Activated T-helper 1 cell treated with anti-CD3 and anti-CD28 coated beads, Interleukin-12 subunit alpha, Interleukin-12 subunit beta, Interleukin-2, Interleukin-4 antibody, amounts not matched to agents 30 ng/mL and 10 ng/mL and 1 ng/mL, durations not matched to agents 14 hours and 24 hours and 36 hours (primary cell): ENCODE measurements at regions of chr5 and their contacts with region 1.

Region 1: GRCh38 chr5:140113699-140114263 is at the start of gene PURA:
- DNase-seq: peak; percentile 94
- H3K4me3 Mint-ChIP-seq: peak within 1 kb of the TSS; percentile 94
- H3K27ac Mint-ChIP-seq: peak within 1 kb of the TSS; percentile 96
- H3K4me1 Mint-ChIP-seq: peaks cover 60% of the 10 kb centered on the region
- H3K27me3 Mint-ChIP-seq: peaks cover 40% of the 10 kb centered on the region
- total RNA-seq, gene PURA: 10.6 and 12.2 TPM in 2 replicates

Region 2: GRCh38 chr5:139787568-139788293 is 326.1 kb before region 1 on chr5:
- intact Hi-C with region 1: loop called (anchors 5 kb)
- DNase-seq: peak; percentile 70
- H3K4me3 Mint-ChIP-seq: peak overlapping the region; percentile 82
- H3K27ac Mint-ChIP-seq: no peak overlapping the region
- H3K4me1 Mint-ChIP-seq: no peaks in the 10 kb centered on the region
- H3K27me3 Mint-ChIP-seq: peaks cover 32% of the 10 kb centered on the region

Region 3: GRCh38 chr5:140073296-140073695 is 40.5 kb before region 1 on chr5:
- intact Hi-C with region 1: loop called (anchors 1 kb)
- DNase-seq: no peak
- H3K4me3 Mint-ChIP-seq: no peak overlapping the region
- H3K27ac Mint-ChIP-seq: no peak overlapping the region
- H3K4me1 Mint-ChIP-seq: no peaks in the 10 kb centered on the region
- H3K27me3 Mint-ChIP-seq: peaks cover 22% of the 10 kb centered on the region

Region 4: GRCh38 chr5:140145818-140146522 is 32.2 kb after region 1 on chr5:
- intact Hi-C with region 1: loop called (anchors 1 kb)
- DNase-seq: peak; percentile 41
- H3K4me3 Mint-ChIP-seq: no peak overlapping the region
- H3K27ac Mint-ChIP-seq: no peak overlapping the region
- H3K4me1 Mint-ChIP-seq: peaks cover 5% of the 10 kb centered on the region
- H3K27me3 Mint-ChIP-seq: peaks cover 42% of the 10 kb centered on the region

Region 5: DNA sequence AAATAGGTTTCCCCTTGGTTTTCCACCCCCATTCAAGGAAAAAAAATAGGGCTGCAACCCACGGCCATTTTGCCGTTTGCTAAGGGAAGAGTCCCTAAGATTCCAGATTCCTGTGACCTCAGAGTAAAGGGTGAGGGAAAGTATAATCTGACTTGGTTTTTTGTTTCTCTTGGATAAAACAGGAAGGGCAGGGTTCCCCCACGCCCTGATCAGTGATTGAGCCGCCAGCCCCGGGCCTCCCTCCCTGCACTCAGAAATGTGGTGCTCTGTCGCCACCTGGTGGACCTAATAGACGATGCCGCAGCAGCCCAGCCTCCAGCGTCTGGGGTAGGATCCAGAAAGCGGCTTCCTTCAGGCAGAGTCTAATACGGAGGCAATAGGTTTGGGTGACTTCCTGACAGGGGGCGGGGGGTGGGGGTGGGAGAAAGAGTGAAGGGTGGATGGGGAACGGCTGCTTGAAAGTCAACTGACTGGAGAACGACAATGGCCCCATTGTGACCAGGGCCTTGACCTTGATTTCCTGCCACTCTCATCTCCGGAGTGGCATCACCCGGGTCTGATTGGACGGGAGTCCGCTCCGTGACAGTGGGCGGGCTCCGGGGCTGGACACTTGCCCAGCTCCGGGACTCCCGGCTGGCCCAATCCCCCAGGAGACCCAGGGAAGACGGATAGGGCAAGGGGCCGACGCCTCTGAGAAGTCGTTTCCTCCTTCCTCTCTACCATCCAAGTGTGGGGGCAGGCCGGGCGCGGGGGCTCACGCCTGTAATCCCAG is 43.4 kb after region 1 on chr5:
- intact Hi-C with region 1: loop called (anchors 1 kb)
- DNase-seq: peak; percentile 76
- H3K4me3 Mint-ChIP-seq: peak overlapping the region; percentile 41
- H3K27ac Mint-ChIP-seq: no peak overlapping the region
- H3K4me1 Mint-ChIP-seq: no peaks in the 10 kb centered on the region
- H3K27me3 Mint-ChIP-seq: peaks cover 4% of the 10 kb centered on the region

Region 6: GRCh38 chr5:140564196-140565023 is 450.6 kb after region 1 on chr5 and contains the starts of genes APBB3 and SLC35A4:
- intact Hi-C with region 1: loop called (anchors 1 kb)
- DNase-seq: peak; percentile 98
- H3K4me3 Mint-ChIP-seq: peak within 1 kb of the TSS; percentile 95
- H3K27ac Mint-ChIP-seq: peak within 1 kb of the TSS; percentile 96
- H3K4me1 Mint-ChIP-seq: peaks cover 54% of the 10 kb centered on the region
- H3K27me3 Mint-ChIP-seq: no peaks in the 10 kb centered on the region
- total RNA-seq, gene APBB3: 17.2 and 21.2 TPM in 2 replicates
- total RNA-seq, gene SLC35A4: 94.3 and 107 TPM in 2 replicates

Region 7: DNA sequence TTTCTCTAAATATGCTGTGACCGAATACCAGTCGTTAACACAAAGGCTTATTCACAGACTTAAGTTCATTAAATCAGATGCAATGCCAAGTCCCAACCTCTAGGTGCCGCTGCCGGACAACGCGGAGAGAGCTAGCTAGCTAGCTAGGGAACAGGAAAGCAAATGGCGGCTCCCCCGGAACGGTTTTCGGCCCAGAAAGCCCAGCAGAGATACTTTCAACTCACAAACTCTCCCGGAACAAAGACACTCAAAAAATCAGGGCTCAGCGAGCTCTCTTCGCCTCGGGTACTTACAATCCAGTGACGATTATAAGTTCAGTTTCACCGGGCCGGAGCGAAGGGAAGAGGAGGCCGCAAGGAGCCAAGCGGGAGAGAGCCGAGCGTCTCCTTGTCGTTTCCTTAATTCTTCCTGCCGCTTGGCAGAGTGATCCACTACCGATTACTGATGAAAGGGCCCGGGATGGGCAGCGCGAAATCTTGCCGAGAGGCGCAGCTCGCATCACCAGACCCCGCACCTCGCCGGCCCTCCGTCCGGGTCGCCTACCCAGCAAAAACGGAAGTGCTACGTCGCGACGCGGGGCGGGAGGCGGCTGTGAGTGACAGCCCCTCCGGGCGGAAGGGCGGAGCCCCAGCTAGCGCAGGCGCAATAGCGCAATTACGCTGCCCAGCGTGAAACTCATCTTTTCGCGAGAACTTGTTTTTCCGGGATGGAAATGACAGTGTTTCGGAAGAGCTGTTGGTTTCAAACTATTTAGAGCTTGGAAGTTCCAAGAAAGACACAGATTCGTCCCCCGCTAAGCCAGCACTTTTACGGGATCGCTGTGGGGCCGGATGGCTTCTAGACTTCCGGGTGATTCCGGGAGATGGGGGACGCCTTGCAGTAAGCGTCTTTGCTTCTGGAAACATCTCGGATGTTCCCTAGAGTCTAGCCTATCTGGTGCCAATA is 1206.7 kb after region 1 on chr5 and contains the start of gene TAF7:
- intact Hi-C with region 1: loop called (anchors 10 kb)
- DNase-seq: peak; percentile 91
- H3K4me3 Mint-ChIP-seq: peak within 1 kb of the TSS; percentile 94
- H3K27ac Mint-ChIP-seq: peak within 1 kb of the TSS; percentile 98
- H3K4me1 Mint-ChIP-seq: peaks cover 31% of the 10 kb centered on the region
- H3K27me3 Mint-ChIP-seq: no peaks in the 10 kb centered on the region
- total RNA-seq, gene TAF7: 71.6 and 73.7 TPM in 2 replicates